CD8-positive, alpha-beta T cell (primary cell): ENCODE measurements at regions of chr11 and their contacts with region 1.

Region 1: DNA sequence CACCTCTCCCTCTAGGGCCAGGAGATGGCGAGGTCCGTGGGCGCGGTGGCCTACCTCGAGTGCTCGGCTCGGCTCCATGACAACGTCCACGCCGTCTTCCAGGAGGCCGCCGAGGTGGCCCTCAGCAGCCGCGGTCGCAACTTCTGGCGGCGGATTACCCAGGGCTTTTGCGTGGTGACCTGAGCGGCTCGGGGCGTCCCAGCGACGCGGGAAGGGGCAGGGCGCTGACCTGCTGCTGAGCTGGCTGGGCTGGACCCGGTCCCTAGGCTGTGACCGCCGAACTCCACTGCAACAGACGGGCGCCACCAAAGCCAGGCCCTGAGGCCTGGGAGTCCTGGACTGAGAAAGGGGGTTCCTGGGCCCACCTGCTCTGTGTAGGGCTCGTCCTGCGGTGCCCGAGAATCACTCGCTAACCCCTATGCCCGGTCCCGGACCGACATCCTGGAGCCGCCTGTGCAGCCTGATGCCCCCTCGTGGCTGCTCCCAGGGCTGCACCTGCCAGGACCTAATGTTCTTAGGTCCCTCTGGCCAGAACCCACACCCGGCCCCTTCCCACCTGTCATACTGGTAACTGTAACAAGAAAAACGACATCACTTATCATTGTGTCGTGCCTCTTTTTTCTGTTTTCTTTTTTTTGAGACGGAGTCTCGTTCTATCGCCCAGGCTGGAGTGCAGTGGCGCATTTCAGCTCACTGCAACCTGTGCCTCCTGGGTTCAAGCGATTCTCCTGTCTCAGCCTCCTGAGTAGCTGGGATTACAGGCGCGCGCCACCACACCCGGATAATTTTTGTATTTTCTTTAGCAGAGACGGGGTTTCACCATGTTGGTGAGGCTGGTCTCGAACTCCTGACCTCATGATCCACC is 15.0 kb downstream of the RHOD start:
- DNase-seq: peak; percentile 43 to 81 (median 71)
- ATAC-seq: peak; percentile 96
- H3K4me3 ChIP-seq: peak overlapping the region; percentile 26 to 46
- H3K4me3 Mint-ChIP-seq: peak overlapping the region; percentile 72
- H3K27ac ChIP-seq: no peak overlapping the region
- H3K27ac Mint-ChIP-seq: no peak overlapping the region
- H3K4me1 ChIP-seq: peaks cover 7% of the 10 kb centered on the region
- H3K4me1 Mint-ChIP-seq: peaks cover 4% of the 10 kb centered on the region
- H3K27me3 ChIP-seq: no peaks in the 10 kb centered on the region
- H3K27me3 Mint-ChIP-seq: peaks cover 5% of the 10 kb centered on the region
- CTCF ChIP-seq: peak; percentile 72

Region 2: GRCh38 chr11:66996609-66997405 is 74.8 kb before region 1 on chr11:
- CTCF ChIA-PET with region 1: no interaction called
- POLR2A ChIA-PET with region 1: no interaction called
- intact Hi-C with region 1: no loop called
- DNase-seq: no peak
- ATAC-seq: no peak
- H3K4me3 ChIP-seq: no peak overlapping the region
- H3K4me3 Mint-ChIP-seq: no peak overlapping the region
- H3K27ac ChIP-seq: no peak overlapping the region
- H3K27ac Mint-ChIP-seq: no peak overlapping the region
- H3K4me1 ChIP-seq: no peaks in the 10 kb centered on the region
- H3K4me1 Mint-ChIP-seq: no peaks in the 10 kb centered on the region
- H3K27me3 ChIP-seq: peaks cover 0 to 4% of the 10 kb centered on the region in 2 experiments
- H3K27me3 Mint-ChIP-seq: peaks cover 10% of the 10 kb centered on the region
- CTCF ChIP-seq: no peak

Region 3: DNA sequence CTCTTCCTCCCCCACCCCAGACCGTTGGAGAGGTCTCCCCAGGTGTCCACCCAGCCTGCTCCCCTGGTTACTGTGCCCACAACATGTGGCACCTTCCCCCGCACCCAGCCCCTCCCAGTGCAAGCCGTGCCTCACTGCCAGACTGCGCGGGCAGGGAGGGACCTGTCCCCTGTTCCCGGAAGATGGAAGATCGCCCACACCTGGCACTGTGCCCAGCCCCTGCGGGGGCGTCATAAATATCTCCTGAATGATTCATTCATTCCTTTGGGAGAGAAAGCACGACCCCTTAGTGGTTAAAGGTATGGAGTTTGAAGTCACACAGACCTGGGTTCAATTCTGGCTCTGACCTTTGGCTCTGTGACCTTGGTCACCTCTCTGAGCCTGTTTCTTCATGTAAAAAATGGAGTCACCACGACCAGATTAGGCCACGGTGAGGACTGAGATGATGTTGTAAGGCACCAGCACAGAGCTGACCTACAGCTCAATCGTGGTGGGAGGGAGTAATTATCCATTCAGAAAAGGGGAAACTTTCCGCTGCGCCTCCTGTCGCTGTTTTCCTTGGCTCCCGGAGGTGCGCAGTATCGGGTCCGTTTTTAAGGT is 49.2 kb before region 1 on chr11:
- CTCF ChIA-PET with region 1: interaction called, 3 read pairs
- POLR2A ChIA-PET with region 1: no interaction called
- intact Hi-C with region 1: loop called in 1 of 2 experiments (anchors 1 kb)
- DNase-seq: no peak
- ATAC-seq: no peak
- H3K4me3 ChIP-seq: no peak overlapping the region
- H3K4me3 Mint-ChIP-seq: peak overlapping the region; percentile 73
- H3K27ac ChIP-seq: no peak overlapping the region
- H3K27ac Mint-ChIP-seq: no peak overlapping the region
- H3K4me1 ChIP-seq: peaks cover 30% of the 10 kb centered on the region
- H3K4me1 Mint-ChIP-seq: peaks cover 26% of the 10 kb centered on the region
- H3K27me3 ChIP-seq: peaks cover 18 to 22% of the 10 kb centered on the region in 2 experiments
- H3K27me3 Mint-ChIP-seq: peaks cover 27% of the 10 kb centered on the region
- CTCF ChIP-seq: no peak

Region 4: DNA sequence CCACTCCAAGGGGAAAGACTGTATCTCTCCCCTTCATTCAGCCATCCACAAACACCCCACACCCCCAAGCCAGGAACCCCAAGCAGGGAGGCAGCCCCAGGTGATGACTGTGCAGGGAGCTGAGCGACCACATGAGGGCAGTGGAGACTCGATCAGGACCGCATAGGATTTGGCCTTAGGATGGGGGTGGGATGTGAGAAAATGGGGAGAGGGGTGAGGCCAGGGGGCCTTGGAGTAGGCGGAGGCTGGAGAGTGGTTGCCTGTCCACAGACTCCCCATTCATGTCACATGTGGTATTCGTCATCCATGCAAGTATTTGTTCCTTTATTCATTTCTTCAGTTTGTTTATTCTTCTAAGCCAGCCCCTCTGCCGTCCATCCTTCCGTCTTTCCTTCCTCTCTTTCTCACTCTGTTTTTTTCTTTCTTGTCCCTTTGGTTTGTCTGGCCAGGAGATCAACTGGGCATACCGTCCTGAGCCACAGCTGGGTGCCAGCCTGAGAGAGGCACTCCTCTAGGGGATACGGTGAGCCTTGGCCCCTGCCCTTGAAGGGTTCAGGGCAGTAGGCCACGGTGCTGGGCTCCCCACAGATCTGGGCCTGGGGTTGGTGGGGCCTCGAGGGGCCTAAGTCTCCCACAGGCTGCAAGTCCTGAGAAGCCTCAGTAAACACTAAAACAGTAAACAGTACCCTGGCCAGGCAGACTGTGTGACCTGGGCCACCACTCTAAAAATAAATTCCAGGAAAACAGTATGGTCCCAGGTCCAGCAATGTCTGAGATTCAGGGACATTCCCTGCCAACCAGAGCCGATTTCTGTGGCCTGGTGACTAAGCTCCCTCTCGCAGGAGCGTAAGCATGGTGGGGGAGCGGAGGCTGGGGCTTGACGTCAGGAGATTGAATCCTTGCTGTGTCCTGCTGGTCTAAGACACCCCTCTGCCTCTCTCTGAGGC is 17.5 kb before region 1 on chr11:
- CTCF ChIA-PET with region 1: interaction called, 31 read pairs
- POLR2A ChIA-PET with region 1: no interaction called
- intact Hi-C with region 1: no loop called
- DNase-seq: peak in 5 of 9 experiments; percentile 28 to 57 (median 38)
- ATAC-seq: peak; percentile 74
- H3K4me3 ChIP-seq: no peak overlapping the region
- H3K4me3 Mint-ChIP-seq: no peak overlapping the region
- H3K27ac ChIP-seq: no peak overlapping the region
- H3K27ac Mint-ChIP-seq: no peak overlapping the region
- H3K4me1 ChIP-seq: peaks cover 10% of the 10 kb centered on the region
- H3K4me1 Mint-ChIP-seq: peaks cover 13% of the 10 kb centered on the region
- H3K27me3 ChIP-seq: peaks cover 0 to 4% of the 10 kb centered on the region in 2 experiments
- H3K27me3 Mint-ChIP-seq: peaks cover 15% of the 10 kb centered on the region
- CTCF ChIP-seq: peak; percentile 27